ENCODE measurements at regions of chr9 and their contacts with region 1.

Region 1: GRCh38 chr9:122810306-122810946 is 10.5 kb downstream of the OR1K1 start:
- DNase-seq: peak; percentile 62
- H3K4me3 ChIP-seq: no peak overlapping the region
- H3K27ac ChIP-seq: no peak overlapping the region
- H3K4me1 ChIP-seq: peaks cover 1% of the 10 kb centered on the region
- H3K27me3 ChIP-seq: no peaks in the 10 kb centered on the region
- CTCF ChIP-seq: peak; percentile 62 to 72

Region 2: DNA sequence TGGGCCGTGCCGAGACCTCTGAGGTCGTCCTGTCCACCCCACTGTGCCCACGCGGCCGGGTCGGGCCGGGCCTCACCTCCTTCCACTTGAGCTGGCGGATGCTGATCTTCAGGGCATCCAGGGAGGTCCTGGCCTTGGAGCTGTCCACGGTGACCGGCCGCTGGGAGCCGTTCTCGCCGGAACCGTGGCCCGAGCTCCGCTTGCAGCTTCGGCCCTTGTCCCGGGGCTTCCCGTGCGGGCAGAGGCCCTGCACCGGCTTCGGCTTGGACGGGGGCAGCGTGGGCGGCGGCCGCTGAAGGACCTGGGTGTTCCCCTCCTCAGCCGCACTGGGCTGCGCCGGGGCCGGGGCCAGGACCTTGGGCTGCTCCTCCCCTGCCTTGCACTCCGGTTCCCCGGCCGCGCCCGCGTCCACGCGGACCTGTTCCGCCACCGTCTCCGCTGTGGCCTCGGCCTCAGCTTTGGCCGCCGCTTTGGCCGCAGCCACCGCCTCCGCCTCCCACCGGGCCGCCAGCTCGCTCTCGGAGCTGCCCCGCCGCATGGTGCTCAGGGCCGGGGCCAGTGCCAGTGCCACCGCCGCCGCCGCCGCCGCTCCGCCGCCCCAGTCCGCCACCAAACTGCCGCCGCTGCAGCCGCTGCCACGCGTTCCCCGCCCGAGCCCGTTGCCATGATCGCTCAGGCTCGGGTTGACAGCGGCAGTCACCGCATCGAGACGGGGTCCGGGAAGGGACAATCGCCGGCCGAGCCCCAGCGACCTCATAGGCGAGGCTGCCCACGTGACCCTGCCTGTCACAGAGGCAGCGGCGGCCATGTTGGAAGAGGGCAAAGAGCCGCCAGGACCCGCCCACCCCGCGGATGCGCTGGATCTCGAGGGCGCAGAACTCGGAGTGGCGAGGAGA is 717.6 kb before region 1 on chr9 and contains the start of gene TTLL11:
- CTCF ChIA-PET with region 1: no interaction called
- dilution Hi-C with region 1: no loop called
- in situ Hi-C with region 1: loop called (anchors 10 to 25 kb)
- intact Hi-C with region 1: no loop called
- DNase-seq: peak; percentile 89
- H3K4me3 ChIP-seq: peak within 1 kb of the TSS; percentile 65 to 91 (median 74)
- H3K27ac ChIP-seq: peak within 1 kb of the TSS; percentile 10
- H3K4me1 ChIP-seq: peaks cover 13% of the 10 kb centered on the region
- H3K27me3 ChIP-seq: no peaks in the 10 kb centered on the region
- CTCF ChIP-seq: no peak
- total RNA-seq, gene TTLL11: 5.7 to 17.5 TPM

Region 3: GRCh38 chr9:122099271-122099869 is 711.1 kb before region 1 on chr9:
- CTCF ChIA-PET with region 1: no interaction called
- dilution Hi-C with region 1: no loop called
- in situ Hi-C with region 1: loop called (anchors 10 to 25 kb)
- intact Hi-C with region 1: loop called (anchors 1 kb)
- DNase-seq: peak; percentile 54
- H3K4me3 ChIP-seq: peak overlapping the region in 2 of 3 experiments; percentile 1 to 17
- H3K27ac ChIP-seq: no peak overlapping the region
- H3K4me1 ChIP-seq: no peaks in the 10 kb centered on the region
- H3K27me3 ChIP-seq: no peaks in the 10 kb centered on the region
- CTCF ChIP-seq: peak; percentile 76 to 81

Region 4: GRCh38 chr9:122374885-122375420 is 435.5 kb before region 1 on chr9:
- CTCF ChIA-PET with region 1: no interaction called
- dilution Hi-C with region 1: no loop called
- in situ Hi-C with region 1: no loop called
- intact Hi-C with region 1: loop called (anchors 2 kb)
- DNase-seq: no peak
- H3K4me3 ChIP-seq: no peak overlapping the region
- H3K27ac ChIP-seq: no peak overlapping the region
- H3K4me1 ChIP-seq: peaks cover 26% of the 10 kb centered on the region
- H3K27me3 ChIP-seq: no peaks in the 10 kb centered on the region
- CTCF ChIP-seq: no peak

Region 5: DNA sequence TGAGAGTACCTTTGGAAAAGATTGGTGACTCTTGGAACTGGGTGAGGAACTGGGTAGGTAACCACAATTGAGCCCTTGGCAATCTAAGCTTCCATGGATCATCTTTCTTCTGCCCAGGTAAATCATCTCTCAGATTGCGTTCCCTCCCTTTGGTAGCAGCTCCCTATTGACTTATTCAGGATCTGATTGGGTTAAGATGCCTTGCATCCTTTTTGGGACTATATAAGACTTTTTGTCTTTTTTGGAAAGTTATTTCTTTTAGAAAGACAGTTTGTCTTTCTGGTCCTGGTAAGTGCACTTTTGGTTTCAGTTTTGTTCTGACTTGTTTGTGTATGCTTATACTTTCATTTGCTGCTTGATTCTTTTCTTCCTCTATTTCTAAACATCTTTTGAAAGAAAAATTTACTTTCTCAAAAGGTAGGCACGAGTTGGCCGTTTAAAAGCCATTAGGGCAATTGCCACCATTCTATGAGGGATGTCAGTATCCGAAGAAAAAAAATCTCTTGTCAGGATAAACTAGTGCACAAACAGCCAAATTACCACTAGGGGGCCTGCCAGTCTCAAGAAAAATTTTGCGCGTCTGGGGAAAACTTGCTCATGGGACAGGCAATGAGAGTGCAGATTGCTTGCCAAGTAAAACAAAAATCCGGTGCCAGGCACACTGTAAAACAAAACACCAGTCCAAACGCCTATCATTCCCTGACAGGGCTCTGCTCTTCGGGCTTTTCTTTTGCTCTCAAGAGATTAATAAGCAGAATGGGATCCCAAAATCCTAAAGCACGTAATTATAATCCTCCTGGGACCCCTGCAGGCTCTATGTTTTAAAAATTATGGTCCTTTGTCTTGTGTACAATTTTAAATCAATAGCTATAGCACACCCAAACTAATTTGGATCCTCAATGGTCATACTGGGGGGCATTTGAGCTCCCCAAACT is 345.5 kb before region 1 on chr9:
- CTCF ChIA-PET with region 1: interaction called, 9 read pairs
- dilution Hi-C with region 1: no loop called
- in situ Hi-C with region 1: loop called (anchors 5 to 10 kb)
- intact Hi-C with region 1: loop called (anchors 1 kb)
- DNase-seq: peak; percentile 80
- H3K4me3 ChIP-seq: peak overlapping the region; percentile 47 to 72 (median 60)
- H3K27ac ChIP-seq: no peak overlapping the region
- H3K4me1 ChIP-seq: peaks cover 5% of the 10 kb centered on the region
- H3K27me3 ChIP-seq: no peaks in the 10 kb centered on the region
- CTCF ChIP-seq: peak; percentile 73 to 82

Region 6: DNA sequence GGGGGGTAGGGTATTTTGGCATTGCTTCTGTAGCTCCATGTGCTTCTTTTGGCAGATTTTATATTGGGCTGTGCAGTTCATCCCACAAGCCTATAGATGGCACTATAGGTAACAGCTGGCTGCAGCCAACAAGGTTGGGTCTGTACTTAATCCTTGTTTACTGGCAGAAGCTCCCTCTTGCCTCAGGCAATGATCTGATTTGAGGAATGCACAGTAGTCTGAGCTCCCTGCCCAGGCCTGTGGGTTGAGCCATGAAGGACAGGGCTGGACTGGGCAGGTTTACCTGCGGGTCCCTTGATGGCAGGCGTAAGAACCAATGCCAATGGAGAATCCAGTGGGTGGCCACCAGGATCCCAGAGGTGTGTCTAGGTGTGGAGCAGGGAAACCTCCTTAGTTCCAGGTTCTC is 311.5 kb before region 1 on chr9:
- CTCF ChIA-PET with region 1: interaction called, 4 read pairs
- dilution Hi-C with region 1: no loop called
- in situ Hi-C with region 1: no loop called
- intact Hi-C with region 1: loop called (anchors 1 kb)
- DNase-seq: peak; percentile 86
- H3K4me3 ChIP-seq: no peak overlapping the region
- H3K27ac ChIP-seq: no peak overlapping the region
- H3K4me1 ChIP-seq: peaks cover 9% of the 10 kb centered on the region
- H3K27me3 ChIP-seq: no peaks in the 10 kb centered on the region
- CTCF ChIP-seq: peak; percentile 89 to 96